GM13976 (cell line): ENCODE measurements at regions of chr7 and their contacts with region 1.

Region 1: GRCh38 chr7:35729061-35729783 is 34.3 kb upstream of the HERPUD2 start:
- DNase-seq: peak; percentile 60
- CTCF ChIP-seq: no peak

Region 2: DNA sequence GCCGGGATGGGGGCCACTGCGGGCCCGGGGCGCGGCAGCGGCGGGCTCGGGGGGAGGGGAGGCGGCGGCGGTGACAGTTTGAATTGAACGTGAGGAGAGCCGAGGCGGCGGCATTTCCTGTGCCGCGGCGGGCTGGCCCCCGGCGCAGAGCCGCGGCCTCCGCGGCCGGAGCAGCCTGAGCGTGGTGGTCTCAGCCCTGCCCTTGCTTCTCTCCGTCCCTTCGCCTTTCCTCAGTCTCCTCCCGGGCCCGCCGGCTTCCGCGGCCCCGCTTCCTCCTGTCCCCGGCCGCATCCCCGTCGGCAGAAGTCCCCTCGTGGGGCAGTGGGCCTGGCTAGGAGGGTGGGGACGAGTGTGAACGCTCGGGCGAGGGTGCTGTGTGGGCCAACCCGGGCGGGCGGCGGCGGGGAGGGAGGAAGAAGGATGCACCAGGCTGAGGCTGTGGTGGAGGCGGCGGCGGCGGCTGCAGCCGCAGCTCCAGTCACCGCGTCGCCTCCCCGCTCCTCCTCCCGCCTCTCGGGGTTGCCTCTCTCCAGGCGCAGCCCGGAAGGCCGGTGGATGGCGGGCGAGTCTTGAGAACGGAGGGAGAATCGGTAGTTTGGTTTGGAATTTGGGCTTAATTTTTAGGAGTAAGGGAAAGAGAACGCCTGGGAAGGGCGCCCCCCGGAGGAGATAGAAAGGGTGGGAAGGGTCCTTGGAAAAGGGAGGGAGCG is 72.3 kb after region 1 on chr7:
- in situ Hi-C with region 1: loop called (anchors 5 kb)
- DNase-seq: peak; percentile 68
- CTCF ChIP-seq: peak; percentile 37